ENCODE measurements at regions of chr15 and their contacts with region 1.

Region 1: DNA sequence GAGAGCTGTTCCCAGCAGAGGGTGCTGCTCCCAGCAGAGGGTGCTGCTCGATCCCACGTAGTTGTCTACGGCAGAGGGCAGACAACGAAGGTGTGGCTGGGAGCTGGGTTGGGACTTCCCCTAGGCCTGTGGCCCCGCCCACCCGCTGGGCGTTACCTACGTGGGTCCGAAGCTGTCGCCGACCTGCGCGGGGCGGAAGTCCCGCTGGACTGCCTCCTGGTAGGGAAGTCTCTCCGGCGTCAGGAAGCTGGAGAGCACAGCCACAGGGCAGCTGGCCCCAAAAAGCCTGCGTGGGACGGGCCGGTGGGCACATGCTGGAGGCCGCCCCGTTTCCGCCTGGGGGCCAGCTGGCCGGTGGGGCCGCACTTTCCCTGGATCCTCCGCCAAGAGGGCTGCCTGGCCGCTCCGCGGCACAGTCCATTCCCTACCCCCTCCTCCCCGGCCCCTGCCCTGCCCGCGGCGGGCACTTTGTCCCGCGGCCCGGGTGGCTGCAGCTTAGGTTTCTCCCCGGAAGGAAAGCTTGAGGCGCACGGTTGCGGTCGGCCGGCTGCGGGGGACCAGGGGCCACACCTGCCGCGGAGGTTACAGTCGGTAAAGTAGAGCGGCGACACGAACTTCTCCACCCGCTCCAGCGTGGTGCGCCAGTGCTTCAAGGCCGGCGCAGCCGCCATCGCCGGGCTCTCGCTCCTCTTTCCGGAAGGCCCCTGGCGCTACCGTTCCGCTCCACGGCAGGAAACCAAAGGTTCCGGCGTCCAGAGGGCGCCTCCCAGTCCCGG is at the start of gene MAN2C1:
- DNase-seq: peak; percentile 97
- CTCF ChIP-seq: peak; percentile 75

Region 2: GRCh38 chr15:74956648-74957300 is 411.3 kb before region 1 on chr15 and contains the start of gene RPP25:
- CTCF ChIA-PET with region 1: no interaction called
- POLR2A ChIA-PET with region 1: no interaction called
- DNase-seq: peak; percentile 88
- CTCF ChIP-seq: no peak

Region 3: DNA sequence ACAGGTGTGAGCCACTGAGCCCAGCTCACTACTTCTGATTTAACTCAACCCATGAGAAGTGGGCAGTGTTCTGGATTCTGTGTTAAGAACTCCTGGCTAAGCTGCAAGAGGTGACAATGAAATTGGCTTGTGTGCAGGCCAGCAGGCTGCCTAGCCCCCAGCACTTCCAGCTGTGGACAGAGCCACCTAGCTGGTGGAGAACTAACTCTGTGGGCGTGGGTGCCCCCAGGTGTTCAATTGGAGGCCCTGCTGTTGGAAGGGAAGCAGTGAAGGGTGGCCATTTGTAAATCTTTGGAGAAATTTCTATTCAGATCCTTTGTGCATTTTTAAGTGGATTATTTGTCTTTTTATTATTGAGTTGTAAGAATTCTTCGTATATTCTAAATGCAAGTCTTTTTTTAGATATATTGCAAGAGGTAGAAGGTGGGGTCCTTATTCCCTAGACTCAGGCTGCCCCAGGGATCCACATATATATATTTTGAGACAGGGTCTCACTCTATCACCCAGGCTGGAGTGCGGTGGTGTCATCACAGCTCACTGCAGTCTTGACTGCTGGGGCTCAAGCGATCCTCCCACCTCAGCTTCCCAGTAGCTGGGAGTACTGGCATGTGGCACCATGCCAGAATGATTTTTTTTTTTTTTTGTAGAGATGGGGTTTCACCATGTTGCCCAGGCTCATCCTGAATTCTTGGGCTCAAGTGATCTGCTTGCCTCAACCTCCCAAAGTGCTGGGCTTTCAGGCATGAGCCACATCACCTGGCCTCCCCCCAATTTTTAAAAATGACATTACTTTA is 379.9 kb before region 1 on chr15:
- CTCF ChIA-PET with region 1: no interaction called
- POLR2A ChIA-PET with region 1: no interaction called
- DNase-seq: no peak
- CTCF ChIP-seq: peak; percentile 33

Region 4: GRCh38 chr15:75354454-75354853 is 13.6 kb before region 1 on chr15:
- CTCF ChIA-PET with region 1: interaction called, 26 read pairs
- POLR2A ChIA-PET with region 1: interaction called, 3 read pairs
- DNase-seq: no peak
- CTCF ChIP-seq: no peak

Region 5: DNA sequence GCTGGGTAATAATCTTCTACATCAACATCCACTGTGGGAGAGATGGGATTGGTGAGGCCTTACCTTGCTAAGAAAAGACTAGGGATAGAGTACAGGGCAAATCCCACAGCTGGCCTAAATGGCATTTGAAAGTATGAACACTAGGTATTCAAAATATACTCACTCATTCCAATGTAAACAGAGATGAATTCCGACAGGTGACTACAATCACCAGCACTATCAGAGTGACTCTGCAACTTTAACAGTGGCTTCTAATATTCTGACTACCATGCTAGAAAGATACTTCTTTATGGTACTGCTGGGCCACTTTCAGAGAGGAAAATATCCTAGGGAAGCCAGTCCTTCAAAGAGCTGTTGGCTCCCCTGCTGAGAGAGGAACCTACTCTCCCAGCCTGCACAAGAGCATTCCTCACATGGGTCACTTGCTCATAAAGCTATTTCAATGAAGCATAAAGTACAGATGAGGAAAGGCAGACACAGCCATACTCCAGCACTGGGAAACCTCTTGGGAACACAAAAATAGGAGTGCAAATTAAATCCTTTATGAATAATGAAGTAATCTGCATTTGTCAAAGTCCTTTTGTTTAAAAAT is 21.8 kb after region 1 on chr15:
- CTCF ChIA-PET with region 1: interaction called, 17 read pairs
- POLR2A ChIA-PET with region 1: interaction called, 4 read pairs
- DNase-seq: no peak
- CTCF ChIP-seq: no peak

Region 6: DNA sequence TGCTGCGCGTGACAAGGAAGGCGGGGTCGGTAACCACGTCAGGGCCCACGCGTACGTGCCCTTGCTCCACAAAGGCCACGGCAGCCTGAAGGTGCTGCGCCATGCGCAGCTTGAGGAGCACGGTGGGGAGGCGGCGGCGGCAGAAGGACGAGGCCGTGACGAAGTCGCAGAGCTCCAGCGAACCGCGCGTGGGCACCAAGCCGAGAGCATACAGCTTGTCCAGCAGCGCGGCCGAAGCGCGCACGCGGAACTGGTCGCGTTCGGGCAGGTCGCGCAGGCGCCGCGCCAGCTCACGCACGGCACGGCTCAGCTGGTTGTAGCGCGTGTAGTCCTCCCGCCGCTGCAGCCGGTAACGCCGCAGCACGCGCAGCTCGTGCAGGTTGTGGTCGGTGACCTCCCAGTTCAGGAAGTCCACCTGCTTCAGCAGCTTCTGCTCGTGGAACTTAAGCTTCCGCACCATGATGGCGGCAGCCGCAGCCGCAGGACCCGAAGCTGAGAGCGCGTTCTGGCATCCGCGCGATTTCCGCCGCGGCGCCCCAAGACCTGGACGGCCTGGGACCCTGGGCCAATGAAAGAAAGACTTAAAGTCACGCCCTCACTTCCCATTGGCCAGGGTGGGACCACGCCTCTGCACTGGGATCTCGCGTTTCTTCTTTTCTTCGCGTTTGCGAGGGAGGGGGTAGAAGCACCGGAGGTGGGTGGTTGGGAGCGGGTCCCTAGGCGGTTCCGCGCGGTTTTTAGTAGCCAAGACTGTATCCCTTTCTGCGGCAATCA is 271.8 kb after region 1 on chr15 and contains the start of gene IMP3:
- CTCF ChIA-PET with region 1: interaction called, 19 read pairs
- POLR2A ChIA-PET with region 1: interaction called, 9 read pairs
- DNase-seq: peak; percentile 97
- CTCF ChIP-seq: no peak

Region 7: DNA sequence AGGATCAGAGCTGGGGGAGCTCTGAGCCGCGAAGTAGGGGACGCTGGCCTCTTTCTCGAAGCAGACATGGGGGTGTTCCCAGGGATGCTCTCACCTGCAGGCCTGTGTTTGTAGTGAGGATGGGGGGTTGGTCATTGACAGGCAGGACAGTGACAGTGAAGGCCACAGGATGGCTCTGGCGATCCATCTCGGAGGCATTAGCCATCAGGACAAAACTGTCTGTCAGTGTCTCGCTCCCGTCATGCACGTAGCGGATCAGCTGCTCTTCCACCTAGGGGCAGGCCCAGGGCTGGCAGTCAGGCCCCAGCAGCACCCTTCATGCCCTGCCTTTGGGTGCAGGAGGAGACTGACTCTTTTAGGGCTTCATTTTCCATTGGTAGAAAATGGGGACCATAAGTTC is 316.5 kb after region 1 on chr15:
- CTCF ChIA-PET with region 1: interaction called, 33 read pairs
- POLR2A ChIA-PET with region 1: no interaction called
- DNase-seq: no peak
- CTCF ChIP-seq: no peak

Region 8: DNA sequence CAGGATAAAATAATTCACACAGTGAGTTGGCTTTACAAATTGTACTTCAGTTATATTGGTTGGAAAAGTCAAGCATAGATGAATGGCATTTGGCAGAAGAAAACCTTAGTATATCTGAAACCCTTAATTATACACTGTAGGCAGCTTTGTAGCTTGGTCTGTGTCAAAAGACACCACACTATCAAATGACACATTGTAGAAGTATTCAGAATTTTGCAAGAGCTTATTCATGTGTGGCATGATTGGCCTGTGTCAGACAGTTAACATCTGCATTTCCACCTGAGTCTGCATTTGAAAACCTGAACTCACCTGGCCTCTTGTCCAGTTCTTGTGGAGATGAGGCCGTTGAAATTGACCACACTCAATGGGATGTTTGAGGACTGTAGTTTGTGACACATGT is 705.5 kb after region 1 on chr15:
- CTCF ChIA-PET with region 1: no interaction called
- POLR2A ChIA-PET with region 1: no interaction called
- DNase-seq: no peak
- CTCF ChIP-seq: no peak

Measured in GM10248 (cell line).